ENCODE measurements at regions of chr6 and their contacts with region 1.

Region 1: GRCh38 chr6:157597446-157598312 is 216.7 kb downstream of the ZDHHC14 start:
- DNase-seq: peak; percentile 42 to 70
- H3K4me3 ChIP-seq: no peak overlapping the region
- H3K27ac ChIP-seq: no peak overlapping the region
- H3K4me1 ChIP-seq: peaks cover 16% of the 10 kb centered on the region
- H3K27me3 ChIP-seq: no peaks in the 10 kb centered on the region
- CTCF ChIP-seq: peak; percentile 73

Region 2: GRCh38 chr6:157314705-157315321 is 282.9 kb before region 1 on chr6:
- CTCF ChIA-PET with region 1: interaction called, 3 read pairs
- POLR2A ChIA-PET with region 1: no interaction called
- intact Hi-C with region 1: loop called (anchors 1 kb)
- DNase-seq: peak in 1 of 2 experiments; percentile 66
- H3K4me3 ChIP-seq: no peak overlapping the region
- H3K27ac ChIP-seq: no peak overlapping the region
- H3K4me1 ChIP-seq: peaks cover 14% of the 10 kb centered on the region
- H3K27me3 ChIP-seq: no peaks in the 10 kb centered on the region
- CTCF ChIP-seq: peak; percentile 81

Region 3: DNA sequence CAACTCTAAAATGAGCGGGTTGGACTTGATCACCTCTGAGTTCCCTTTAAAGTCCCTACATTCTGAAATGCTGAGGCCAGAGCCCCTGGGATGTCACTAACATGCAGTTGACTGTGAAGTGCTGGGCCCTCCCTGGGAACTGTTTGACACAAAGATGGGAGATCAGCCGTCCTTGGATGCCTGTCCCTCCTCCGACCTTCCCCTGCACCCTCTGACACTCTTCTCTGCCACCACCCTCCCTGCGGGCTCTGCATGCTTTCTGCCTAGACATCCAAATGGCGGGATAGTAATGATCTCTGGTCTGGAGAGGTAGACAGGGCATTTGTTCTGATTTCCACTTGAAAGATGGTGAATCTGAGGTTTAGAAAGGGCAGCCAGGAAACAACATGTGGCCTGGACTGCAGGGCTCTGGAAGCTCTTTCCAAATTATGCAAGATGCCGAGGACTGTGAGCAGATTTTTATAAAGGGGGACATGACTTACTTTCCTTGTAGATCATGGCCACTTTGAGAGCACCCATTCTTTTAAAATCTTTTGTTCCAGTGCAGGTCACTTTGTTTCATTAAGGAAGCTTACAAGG is 103.5 kb before region 1 on chr6:
- CTCF ChIA-PET with region 1: no interaction called
- POLR2A ChIA-PET with region 1: no interaction called
- intact Hi-C with region 1: no loop called
- DNase-seq: no peak
- H3K4me3 ChIP-seq: no peak overlapping the region
- H3K27ac ChIP-seq: no peak overlapping the region
- H3K4me1 ChIP-seq: no peaks in the 10 kb centered on the region
- H3K27me3 ChIP-seq: no peaks in the 10 kb centered on the region
- CTCF ChIP-seq: no peak

Region 4: DNA sequence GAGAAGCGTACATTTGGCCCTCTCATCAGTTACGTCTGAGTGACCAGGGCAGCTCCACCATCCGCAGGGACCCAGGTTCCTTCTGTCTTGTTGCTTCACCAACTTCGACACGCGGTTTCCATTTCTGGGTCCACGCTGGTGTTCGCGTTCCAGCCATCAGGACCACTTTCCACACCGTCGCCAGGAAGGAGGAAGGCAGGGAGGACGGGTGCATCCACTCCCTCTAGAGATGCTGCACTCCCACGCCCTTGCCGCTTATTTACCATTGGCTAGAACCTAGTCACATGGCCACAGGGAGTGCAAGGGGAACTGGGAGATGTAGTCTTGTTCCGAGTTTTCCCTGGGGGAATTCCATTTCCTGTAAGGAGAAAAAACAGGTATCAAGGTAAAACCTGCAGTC is 192.2 kb after region 1 on chr6:
- CTCF ChIA-PET with region 1: no interaction called
- POLR2A ChIA-PET with region 1: no interaction called
- intact Hi-C with region 1: no loop called
- DNase-seq: no peak
- H3K4me3 ChIP-seq: no peak overlapping the region
- H3K27ac ChIP-seq: no peak overlapping the region
- H3K4me1 ChIP-seq: peaks cover 13% of the 10 kb centered on the region
- H3K27me3 ChIP-seq: no peaks in the 10 kb centered on the region
- CTCF ChIP-seq: no peak

Region 5: GRCh38 chr6:158571826-158572652 is 974.4 kb after region 1 on chr6:
- CTCF ChIA-PET with region 1: no interaction called
- POLR2A ChIA-PET with region 1: no interaction called
- intact Hi-C with region 1: no loop called
- DNase-seq: peak; percentile 78 to 92
- H3K4me3 ChIP-seq: peak overlapping the region; percentile 10; the same call in 1 of the 2 replicates
- H3K27ac ChIP-seq: peak overlapping the region; percentile 59
- H3K4me1 ChIP-seq: peaks cover 28% of the 10 kb centered on the region
- H3K27me3 ChIP-seq: no peaks in the 10 kb centered on the region
- CTCF ChIP-seq: no peak